GM12878 (cell line): ENCODE measurements at regions of chr14 and their contacts with region 1.

Region 1: GRCh38 chr14:61860294-61860918 is 98.2 kb downstream of the SNAPC1 start:
- DNase-seq: peak; percentile 44
- ATAC-seq: peak; percentile 100
- H3K4me3 ChIP-seq: no peak overlapping the region
- H3K27ac ChIP-seq: no peak overlapping the region
- H3K4me1 ChIP-seq: no peaks in the 10 kb centered on the region
- H3K27me3 ChIP-seq: no peaks in the 10 kb centered on the region
- CTCF ChIP-seq: peak; percentile 84 to 96 (median 87)
- EP300 ChIP-seq: no peak
- POLR2A ChIP-seq: no peak
- RAD21 ChIP-seq: peak; percentile 81

Region 2: DNA sequence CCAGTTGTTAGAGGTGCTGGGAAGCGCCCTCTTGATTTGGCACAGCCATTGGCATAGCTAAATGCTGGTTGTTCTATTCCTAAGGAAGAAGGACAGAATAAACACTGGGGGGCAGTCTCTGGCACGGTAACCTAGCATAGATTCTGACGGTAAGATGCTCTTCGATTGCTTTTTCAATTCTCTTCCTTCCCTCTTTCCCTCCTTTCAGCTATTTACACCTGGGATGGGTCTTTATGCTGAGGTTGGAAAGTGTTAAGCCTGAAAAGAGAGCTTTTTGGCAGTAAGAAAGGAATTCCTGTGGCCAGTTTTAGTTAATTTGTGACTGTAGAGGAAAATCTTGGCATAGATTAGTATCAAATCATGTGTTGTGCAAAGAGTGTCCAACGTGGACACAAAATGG is 64.6 kb after region 1 on chr14:
- CTCF ChIA-PET with region 1: interaction called, 14 read pairs
- POLR2A ChIA-PET with region 1: no interaction called
- RAD21 ChIA-PET with region 1: interaction called, 4 read pairs
- SMC1A ChIA-PET with region 1: interaction called, 9 read pairs
- in situ Hi-C with region 1: no loop called
- intact Hi-C with region 1: loop called (anchors 2 kb)
- DNase-seq: no peak
- ATAC-seq: peak; percentile 77
- H3K4me3 ChIP-seq: no peak overlapping the region
- H3K27ac ChIP-seq: no peak overlapping the region
- H3K4me1 ChIP-seq: no peaks in the 10 kb centered on the region
- H3K27me3 ChIP-seq: no peaks in the 10 kb centered on the region; a peak in 1 of 4 replicates
- CTCF ChIP-seq: peak; percentile 35 to 44 (median 41); a peak in 5 of 6 replicates
- EP300 ChIP-seq: no peak
- POLR2A ChIP-seq: no peak
- RAD21 ChIP-seq: peak; percentile 82